Caco-2 (cell line): ENCODE measurements at regions of chr2 and their contacts with region 1.

Region 1: GRCh38 chr2:241877989-241878970 is 8.8 kb downstream of the RTP5 start:
- DNase-seq: peak; percentile 55 to 73
- H3K4me3 ChIP-seq: no peak overlapping the region
- H3K4me3 Mint-ChIP-seq: no peak overlapping the region
- H3K27ac Mint-ChIP-seq: no peak overlapping the region
- H3K4me1 ChIP-seq: peaks cover 4% of the 10 kb centered on the region; the same call in 1 of the 2 replicates
- H3K4me1 Mint-ChIP-seq: no peaks in the 10 kb centered on the region
- H3K27me3 ChIP-seq: no peaks in the 10 kb centered on the region
- H3K27me3 Mint-ChIP-seq: no peaks in the 10 kb centered on the region
- CTCF ChIP-seq: peak; percentile 43 to 80

Region 2: GRCh38 chr2:241666627-241667400 is 211.5 kb before region 1 on chr2:
- CTCF ChIA-PET with region 1: no interaction called
- POLR2A ChIA-PET with region 1: no interaction called
- intact Hi-C with region 1: loop called (anchors 10 kb)
- DNase-seq: no peak
- H3K4me3 ChIP-seq: no peak overlapping the region
- H3K4me3 Mint-ChIP-seq: no peak overlapping the region
- H3K27ac Mint-ChIP-seq: no peak overlapping the region
- H3K4me1 ChIP-seq: no peaks in the 10 kb centered on the region
- H3K4me1 Mint-ChIP-seq: peaks cover 6% of the 10 kb centered on the region
- H3K27me3 ChIP-seq: no peaks in the 10 kb centered on the region
- H3K27me3 Mint-ChIP-seq: no peaks in the 10 kb centered on the region
- CTCF ChIP-seq: no peak